ENCODE measurements at regions of chr2 and their contacts with region 1.

Region 1: DNA sequence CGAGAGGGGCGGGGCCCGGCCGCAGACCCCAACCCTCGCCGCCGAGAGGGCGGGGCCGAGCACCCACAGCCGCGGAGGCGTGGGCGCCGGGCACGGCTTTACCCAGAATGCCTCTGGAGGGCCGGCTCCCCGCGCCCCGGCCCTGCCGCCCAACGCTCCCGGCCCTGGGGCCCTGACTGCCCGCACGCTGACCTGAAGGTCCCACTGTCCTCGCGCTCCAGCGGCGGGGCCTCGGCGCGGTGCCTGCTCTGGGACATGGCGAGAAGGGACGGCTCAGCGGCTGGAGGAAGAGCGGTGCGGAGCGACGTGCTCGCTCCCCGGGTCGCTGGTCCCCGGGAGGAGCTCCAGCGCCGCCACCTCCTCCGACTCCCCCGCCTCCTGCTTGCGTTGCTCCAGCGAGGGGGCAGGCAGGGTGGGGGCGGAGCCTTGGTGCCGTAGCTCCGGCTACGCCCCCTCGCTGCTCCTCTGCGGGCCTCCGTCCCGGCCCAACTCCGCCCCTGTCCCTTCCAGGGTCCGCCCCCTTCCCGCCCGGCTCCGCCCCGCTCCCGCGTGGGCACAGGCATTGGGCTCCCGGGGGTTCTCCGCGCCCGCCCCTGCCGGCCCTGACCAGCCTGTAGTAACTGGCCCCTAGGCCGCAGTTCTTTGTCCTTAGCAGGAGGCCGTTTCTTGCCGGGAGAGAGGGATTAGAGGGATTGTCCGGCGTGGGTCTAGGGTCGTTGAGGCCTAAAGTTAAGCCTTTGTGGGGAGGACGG is at the starts of genes PJVK and PRKRA:
- DNase-seq: peak; percentile 93 to 98
- H3K4me3 ChIP-seq: peak within 1 kb of the TSS; percentile 67 to 96 (median 92)
- H3K27ac ChIP-seq: peak within 1 kb of the TSS; percentile 99
- H3K4me1 ChIP-seq: peaks cover 0 to 2% (median 0%) of the 10 kb centered on the region in 4 experiments; a peak in 2 of 7 replicates
- H3K27me3 ChIP-seq: no peaks in the 10 kb centered on the region
- CTCF ChIP-seq: no peak
- EP300 ChIP-seq: no peak
- POLR2A ChIP-seq: peak; percentile 89 to 97
- RAD21 ChIP-seq: no peak
- total RNA-seq, gene PJVK: 2.3 and 2.4 TPM in 2 replicates
- total RNA-seq, gene PRKRA: 55.3 and 60.4 TPM in 2 replicates

Region 2: DNA sequence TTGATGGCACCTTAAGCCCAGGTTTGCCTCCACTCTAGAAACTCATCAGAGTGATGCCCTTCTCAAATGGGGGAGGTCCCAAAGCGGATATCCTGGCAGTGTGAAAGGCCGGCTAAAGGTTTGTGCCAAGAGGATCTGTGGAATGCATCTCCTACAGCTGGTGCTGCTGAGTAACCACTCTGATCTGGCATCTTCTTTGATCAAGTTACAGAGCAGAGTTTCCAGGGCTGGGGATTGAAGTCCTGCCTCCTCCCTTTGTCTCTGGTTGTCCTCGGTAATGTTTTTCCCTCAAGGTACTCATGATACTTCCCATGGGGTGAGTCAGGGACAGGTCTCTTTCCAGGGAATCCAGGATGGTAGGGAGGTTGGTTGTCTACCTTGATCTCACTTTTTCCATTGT is 24.6 kb before region 1 on chr2:
- CTCF ChIA-PET with region 1: no interaction called
- POLR2A ChIA-PET with region 1: interaction called, 17 read pairs
- DNase-seq: no peak
- H3K4me3 ChIP-seq: no peak overlapping the region
- H3K27ac ChIP-seq: no peak overlapping the region
- H3K4me1 ChIP-seq: no peaks in the 10 kb centered on the region
- H3K27me3 ChIP-seq: no peaks in the 10 kb centered on the region
- CTCF ChIP-seq: no peak
- EP300 ChIP-seq: no peak
- POLR2A ChIP-seq: no peak
- RAD21 ChIP-seq: no peak

Region 3: DNA sequence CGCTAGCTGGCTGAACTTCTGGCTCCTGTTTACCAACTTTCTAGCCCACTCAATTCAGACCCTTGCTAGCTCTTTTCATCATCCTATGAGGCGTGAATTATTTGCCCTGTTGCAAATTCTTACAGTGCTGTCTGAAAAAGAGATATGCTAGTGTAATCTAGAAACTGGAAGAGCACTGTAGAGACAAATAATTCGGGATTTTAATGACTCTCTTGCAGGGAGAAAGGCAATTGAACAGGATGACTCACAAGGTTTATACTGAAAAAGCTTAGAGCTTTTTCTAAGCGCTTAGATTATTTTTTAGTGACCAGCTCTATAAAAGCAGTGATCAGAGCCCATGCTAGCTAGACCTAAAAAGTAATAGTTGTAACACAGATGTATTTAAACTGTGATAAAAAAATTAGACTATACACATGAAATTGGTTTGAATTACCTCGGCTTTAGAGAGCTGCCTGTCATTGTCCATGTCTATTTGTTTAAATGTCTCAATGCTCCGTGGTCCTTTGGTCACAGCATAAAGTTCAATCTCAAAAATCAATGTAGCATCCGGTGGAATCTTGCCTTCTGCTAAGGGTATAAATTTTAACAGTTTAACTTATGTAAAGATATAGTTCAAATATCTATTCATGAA is 18.4 kb after region 1 on chr2:
- CTCF ChIA-PET with region 1: interaction called, 3 read pairs
- POLR2A ChIA-PET with region 1: interaction called, 23 read pairs
- DNase-seq: no peak
- H3K4me3 ChIP-seq: no peak overlapping the region
- H3K27ac ChIP-seq: no peak overlapping the region
- H3K4me1 ChIP-seq: no peaks in the 10 kb centered on the region
- H3K27me3 ChIP-seq: no peaks in the 10 kb centered on the region
- CTCF ChIP-seq: no peak
- EP300 ChIP-seq: no peak
- POLR2A ChIP-seq: no peak
- RAD21 ChIP-seq: no peak

Region 4: DNA sequence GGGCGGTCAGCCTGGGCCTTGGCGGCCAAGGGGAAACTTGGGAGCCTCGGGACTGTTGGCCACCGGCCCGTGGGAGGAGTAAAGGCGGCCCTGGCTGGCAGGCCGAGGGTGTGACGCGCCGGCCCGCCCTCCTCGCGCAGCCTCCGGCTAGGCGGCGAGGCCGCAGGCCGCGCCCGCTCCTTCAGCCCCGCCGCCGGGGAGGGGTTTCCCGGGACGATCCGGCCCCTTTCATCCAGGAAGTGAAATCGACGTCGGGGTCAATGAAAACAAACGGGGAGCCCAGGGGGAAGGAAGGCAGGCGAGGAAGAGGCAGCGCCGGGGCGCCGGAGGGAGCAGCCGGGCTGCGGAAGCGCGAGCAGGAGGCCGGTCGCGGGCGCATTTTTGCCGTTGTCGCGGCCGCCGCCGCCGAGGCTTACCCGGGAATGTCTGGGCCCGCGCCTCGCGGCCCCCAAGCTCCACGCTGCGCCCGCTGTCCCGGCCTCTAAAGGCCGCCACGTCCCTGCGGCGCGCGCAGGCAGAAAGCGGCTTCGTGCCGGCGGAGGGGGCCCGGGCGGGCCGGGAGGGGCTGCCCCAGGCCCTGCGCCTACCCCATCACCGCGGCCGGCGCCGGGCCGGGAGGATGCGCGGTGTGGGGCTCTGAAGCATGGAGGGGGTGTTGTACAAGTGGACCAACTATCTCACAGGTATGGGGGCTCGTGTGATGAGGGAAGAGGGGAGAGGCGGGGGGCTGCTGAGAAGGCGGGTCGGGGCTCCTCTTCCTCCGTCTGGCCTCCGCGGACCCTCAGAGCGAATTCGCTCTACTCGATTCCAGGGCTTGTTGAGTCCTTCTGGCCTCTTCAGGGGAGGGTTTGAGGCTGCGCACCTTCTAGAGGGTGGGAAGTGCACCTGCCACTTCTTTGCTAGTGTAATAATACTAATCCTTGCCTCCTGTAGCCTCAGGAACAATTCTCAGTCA is 29.6 kb after region 1 on chr2 and contains the start of gene PLEKHA3:
- CTCF ChIA-PET with region 1: interaction called, 4 read pairs
- POLR2A ChIA-PET with region 1: interaction called, 17 read pairs
- DNase-seq: peak; percentile 75 to 90
- H3K4me3 ChIP-seq: peak within 1 kb of the TSS; percentile 50 to 83 (median 76)
- H3K27ac ChIP-seq: no peak within 1 kb of the TSS
- H3K4me1 ChIP-seq: peaks cover 0 to 12% (median 4%) of the 10 kb centered on the region in 4 experiments; a peak in 3 of 7 replicates
- H3K27me3 ChIP-seq: no peaks in the 10 kb centered on the region; a peak in 2 of 7 replicates
- CTCF ChIP-seq: no peak
- EP300 ChIP-seq: no peak
- POLR2A ChIP-seq: peak in 1 of 2 experiments; percentile 69; a peak in 1 of 3 replicates
- RAD21 ChIP-seq: no peak
- total RNA-seq, gene PLEKHA3: 20.1 and 22.3 TPM in 2 replicates

Region 5: GRCh38 chr2:178568227-178568626 is 117.3 kb after region 1 on chr2:
- CTCF ChIA-PET with region 1: no interaction called
- POLR2A ChIA-PET with region 1: no interaction called
- DNase-seq: no peak
- H3K4me3 ChIP-seq: no peak overlapping the region
- H3K27ac ChIP-seq: no peak overlapping the region
- H3K4me1 ChIP-seq: no peaks in the 10 kb centered on the region
- H3K27me3 ChIP-seq: no peaks in the 10 kb centered on the region
- CTCF ChIP-seq: no peak
- EP300 ChIP-seq: no peak
- POLR2A ChIP-seq: no peak
- RAD21 ChIP-seq: no peak